ENCODE measurements at regions of chr17 and their contacts with region 1.

Region 1: GRCh38 chr17:78154903-78155811 is 9.0 kb downstream of the C17orf99 start:
- DNase-seq: peak; percentile 79
- H3K4me3 ChIP-seq: no peak overlapping the region
- H3K27ac ChIP-seq: no peak overlapping the region
- H3K4me1 ChIP-seq: peaks cover 54% of the 10 kb centered on the region
- CTCF ChIP-seq: no peak

Region 2: DNA sequence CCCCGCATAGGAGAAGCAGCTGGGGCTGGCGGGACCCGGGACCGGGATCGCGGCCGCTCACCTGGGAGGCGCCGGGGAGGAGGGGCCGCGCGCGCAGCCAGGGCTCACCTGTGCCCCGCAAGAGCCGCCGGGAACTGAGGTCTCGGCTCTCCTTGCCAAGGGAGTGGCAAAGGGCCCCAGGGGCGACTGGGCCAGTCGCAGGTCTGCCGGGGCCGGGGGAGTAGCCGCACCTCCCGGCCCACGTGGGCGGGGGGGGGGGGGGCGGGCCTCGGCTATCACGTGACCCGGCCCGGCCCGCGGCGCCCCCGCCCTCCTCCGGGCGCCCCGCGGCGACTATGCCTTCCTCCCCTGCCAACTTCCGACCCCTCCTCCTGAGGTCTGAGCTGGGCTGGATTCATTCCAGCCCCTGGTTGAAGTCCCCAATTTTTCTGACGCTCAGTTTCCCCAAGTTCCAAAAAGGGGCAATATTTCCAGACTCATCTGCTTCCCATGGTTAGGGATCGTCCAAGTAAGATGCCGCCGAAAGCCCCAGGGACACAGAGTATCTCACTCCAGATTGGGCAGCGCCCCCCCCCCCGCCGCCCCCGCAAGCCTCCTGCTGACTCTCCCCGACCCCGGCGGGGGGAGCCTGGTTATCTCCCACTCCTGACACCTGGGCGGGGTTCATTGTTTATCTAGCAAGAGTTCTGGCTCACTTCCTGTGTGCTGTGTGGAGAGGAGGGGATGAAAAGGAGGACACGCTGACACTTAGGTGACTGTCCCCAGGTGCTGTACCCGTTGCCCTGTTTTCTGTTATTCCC is 26.4 kb before region 1 on chr17 and contains the start of gene TMC6:
- CTCF ChIA-PET with region 1: interaction called, 5 read pairs
- POLR2A ChIA-PET with region 1: interaction called, 5 read pairs
- intact Hi-C with region 1: loop called (anchors 1 kb)
- DNase-seq: peak; percentile 86
- H3K4me3 ChIP-seq: peak within 1 kb of the TSS; percentile 81
- H3K27ac ChIP-seq: peak within 1 kb of the TSS; percentile 91
- H3K4me1 ChIP-seq: peaks cover 85% of the 10 kb centered on the region
- CTCF ChIP-seq: no peak
- total RNA-seq, gene TMC6: 94.0 and 124 TPM in 2 replicates

Region 3: GRCh38 chr17:78168242-78168902 is 13.2 kb after region 1 on chr17 and contains the start of gene SYNGR2:
- CTCF ChIA-PET with region 1: no interaction called
- POLR2A ChIA-PET with region 1: interaction called, 6 read pairs
- intact Hi-C with region 1: loop called (anchors 2 kb)
- DNase-seq: peak; percentile 93
- H3K4me3 ChIP-seq: peak within 1 kb of the TSS; percentile 75
- H3K27ac ChIP-seq: no peak within 1 kb of the TSS
- H3K4me1 ChIP-seq: peaks cover 53% of the 10 kb centered on the region
- CTCF ChIP-seq: no peak
- total RNA-seq, gene SYNGR2: 21.3 and 35.4 TPM in 2 replicates